T-cell (primary cell): ENCODE measurements at regions of chr7 and their contacts with region 1.

Region 1: DNA sequence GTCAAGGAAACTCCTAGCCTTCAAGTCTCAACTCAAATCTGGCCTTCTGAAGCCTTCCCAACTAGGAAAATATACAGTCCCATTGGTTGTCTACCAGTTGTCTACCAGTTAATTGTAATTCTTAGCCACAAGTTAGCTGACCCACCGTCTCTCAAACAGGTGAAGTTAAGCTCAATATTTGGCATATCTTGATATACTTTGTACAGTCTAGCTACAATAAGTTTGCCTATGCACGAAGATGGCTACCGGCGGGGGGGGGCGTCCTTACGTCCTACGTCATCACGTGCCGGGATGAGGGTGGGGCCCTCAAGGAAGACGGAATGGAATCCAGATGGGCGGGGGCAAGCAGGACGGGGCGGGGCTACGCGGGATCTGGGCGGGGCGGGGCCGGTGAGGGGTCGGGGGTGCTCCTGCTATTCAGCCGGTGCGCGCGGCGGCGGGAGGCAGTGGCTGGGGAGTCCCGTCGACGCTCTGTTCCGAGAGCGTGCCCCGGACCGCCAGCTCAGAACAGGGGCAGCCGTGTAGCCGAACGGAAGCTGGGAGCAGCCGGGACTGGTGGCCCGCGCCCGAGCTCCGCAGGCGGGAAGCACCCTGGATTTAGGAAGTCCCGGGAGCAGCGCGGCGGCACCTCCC is at the start of gene AHR:
- DNase-seq: peak; percentile 72 to 95 (median 85)
- ATAC-seq: peak; percentile 72 to 79 (median 75)
- H3K4me3 ChIP-seq: peak within 1 kb of the TSS; percentile 52 to 74
- H3K4me3 Mint-ChIP-seq: peak within 1 kb of the TSS; percentile 88 to 97 (median 94)
- H3K27ac ChIP-seq: peak within 1 kb of the TSS; percentile 75
- H3K27ac Mint-ChIP-seq: peak within 1 kb of the TSS; percentile 85 to 89
- H3K4me1 ChIP-seq: peaks cover 3 to 24% of the 10 kb centered on the region in 2 experiments
- H3K4me1 Mint-ChIP-seq: peaks cover 27 to 30% (median 30%) of the 10 kb centered on the region in 3 donors
- H3K27me3 ChIP-seq: no peaks in the 10 kb centered on the region
- H3K27me3 Mint-ChIP-seq: no peaks in the 10 kb centered on the region
- total RNA-seq, gene AHR: 40.2 to 76.4 (median 52.5) TPM

Region 2: GRCh38 chr7:17063045-17063383 is 235.3 kb before region 1 on chr7:
- CTCF ChIA-PET with region 1: interaction called, 4 to 18 read pairs
- POLR2A ChIA-PET with region 1: no interaction called
- DNase-seq: peak in 1 of 35 experiments; percentile 3
- ATAC-seq: peak in 1 of 4 experiments; percentile 48
- H3K4me3 ChIP-seq: no peak overlapping the region
- H3K4me3 Mint-ChIP-seq: no peak overlapping the region
- H3K27ac ChIP-seq: no peak overlapping the region
- H3K27ac Mint-ChIP-seq: no peak overlapping the region
- H3K4me1 ChIP-seq: no peaks in the 10 kb centered on the region
- H3K4me1 Mint-ChIP-seq: peaks cover 0 to 8% (median 0%) of the 10 kb centered on the region in 3 donors
- H3K27me3 ChIP-seq: no peaks in the 10 kb centered on the region
- H3K27me3 Mint-ChIP-seq: no peaks in the 10 kb centered on the region

Region 3: DNA sequence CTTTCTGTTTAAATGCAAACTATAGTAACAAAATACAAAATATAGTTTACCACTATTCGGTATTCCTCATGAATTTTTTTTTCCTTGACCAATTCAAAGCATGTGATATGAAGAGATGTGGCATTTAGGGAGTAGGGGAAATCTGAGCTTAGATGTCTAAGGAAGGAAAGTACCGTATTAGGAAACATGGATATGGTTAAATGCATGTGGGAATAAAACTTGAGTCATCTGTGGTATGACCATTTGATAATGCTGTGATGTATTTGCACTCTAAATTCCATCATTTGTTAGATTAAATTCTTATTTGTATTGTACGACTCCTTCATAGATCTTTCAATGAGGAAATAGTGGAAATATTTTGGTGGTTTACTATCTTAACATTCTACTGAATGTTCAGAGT is 19.8 kb after region 1 on chr7:
- CTCF ChIA-PET with region 1: interaction called in 1 of 2 experiments, 14 read pairs
- POLR2A ChIA-PET with region 1: interaction called in 1 of 2 experiments, 4 read pairs
- DNase-seq: no peak
- ATAC-seq: no peak
- H3K4me3 ChIP-seq: no peak overlapping the region
- H3K4me3 Mint-ChIP-seq: no peak overlapping the region
- H3K27ac ChIP-seq: no peak overlapping the region
- H3K27ac Mint-ChIP-seq: no peak overlapping the region
- H3K4me1 ChIP-seq: no peaks in the 10 kb centered on the region
- H3K4me1 Mint-ChIP-seq: peaks cover 8 to 35% (median 25%) of the 10 kb centered on the region in 3 donors
- H3K27me3 ChIP-seq: no peaks in the 10 kb centered on the region
- H3K27me3 Mint-ChIP-seq: no peaks in the 10 kb centered on the region

Region 4: DNA sequence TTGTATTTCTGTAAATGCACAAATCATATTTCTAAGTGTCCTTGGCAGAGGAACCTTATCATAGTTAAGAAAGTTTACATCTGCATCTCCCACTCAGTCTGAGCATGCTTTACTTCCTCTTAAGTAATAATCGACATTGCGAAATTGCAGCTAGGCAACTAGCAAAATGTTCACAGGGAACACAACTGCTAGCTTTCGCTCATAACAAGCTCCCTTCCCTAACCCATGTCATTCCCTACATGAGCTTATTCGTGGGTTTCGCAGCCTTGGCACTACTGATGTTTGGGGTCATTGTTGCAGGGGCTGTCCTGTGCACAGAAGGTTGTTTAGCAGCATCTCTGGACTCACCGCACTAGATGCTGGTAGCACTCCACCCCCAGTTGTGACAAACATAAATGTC is 71.8 kb after region 1 on chr7:
- CTCF ChIA-PET with region 1: no interaction called
- POLR2A ChIA-PET with region 1: no interaction called
- DNase-seq: no peak
- ATAC-seq: no peak
- H3K4me3 ChIP-seq: no peak overlapping the region
- H3K4me3 Mint-ChIP-seq: no peak overlapping the region
- H3K27ac ChIP-seq: no peak overlapping the region
- H3K27ac Mint-ChIP-seq: no peak overlapping the region
- H3K4me1 ChIP-seq: peaks cover 0 to 4% of the 10 kb centered on the region in 2 experiments
- H3K4me1 Mint-ChIP-seq: peaks cover 1 to 11% (median 10%) of the 10 kb centered on the region in 3 donors
- H3K27me3 ChIP-seq: peaks cover 0 to 3% of the 10 kb centered on the region in 2 experiments
- H3K27me3 Mint-ChIP-seq: no peaks in the 10 kb centered on the region

Region 5: DNA sequence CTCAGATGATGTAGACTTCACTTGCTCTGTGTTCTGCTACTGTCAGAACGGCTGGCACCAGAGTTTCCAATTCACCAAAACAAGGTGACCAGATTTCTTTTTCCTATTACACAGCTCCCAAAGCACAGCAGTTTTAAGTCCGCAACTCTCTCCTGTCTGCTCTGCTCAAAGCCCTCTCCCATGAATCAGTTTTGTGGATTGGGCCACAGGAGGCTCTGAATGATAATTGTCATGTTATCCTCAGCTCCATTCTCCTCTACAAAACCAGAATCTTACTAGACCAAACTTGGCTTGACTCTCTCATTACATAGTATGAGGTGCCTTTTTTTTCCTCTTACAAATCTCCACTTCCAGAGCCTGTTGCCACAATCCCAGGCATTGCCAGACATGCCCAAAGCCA is 418.5 kb after region 1 on chr7:
- CTCF ChIA-PET with region 1: no interaction called
- POLR2A ChIA-PET with region 1: no interaction called
- DNase-seq: no peak
- ATAC-seq: no peak
- H3K4me3 ChIP-seq: no peak overlapping the region
- H3K4me3 Mint-ChIP-seq: no peak overlapping the region
- H3K27ac ChIP-seq: no peak overlapping the region
- H3K27ac Mint-ChIP-seq: no peak overlapping the region
- H3K4me1 ChIP-seq: no peaks in the 10 kb centered on the region
- H3K4me1 Mint-ChIP-seq: no peaks in the 10 kb centered on the region
- H3K27me3 ChIP-seq: no peaks in the 10 kb centered on the region
- H3K27me3 Mint-ChIP-seq: no peaks in the 10 kb centered on the region